Psoas muscle (tissue), 8 donors: ENCODE measurements at regions of chr19 and their contacts with region 1.

Region 1: DNA sequence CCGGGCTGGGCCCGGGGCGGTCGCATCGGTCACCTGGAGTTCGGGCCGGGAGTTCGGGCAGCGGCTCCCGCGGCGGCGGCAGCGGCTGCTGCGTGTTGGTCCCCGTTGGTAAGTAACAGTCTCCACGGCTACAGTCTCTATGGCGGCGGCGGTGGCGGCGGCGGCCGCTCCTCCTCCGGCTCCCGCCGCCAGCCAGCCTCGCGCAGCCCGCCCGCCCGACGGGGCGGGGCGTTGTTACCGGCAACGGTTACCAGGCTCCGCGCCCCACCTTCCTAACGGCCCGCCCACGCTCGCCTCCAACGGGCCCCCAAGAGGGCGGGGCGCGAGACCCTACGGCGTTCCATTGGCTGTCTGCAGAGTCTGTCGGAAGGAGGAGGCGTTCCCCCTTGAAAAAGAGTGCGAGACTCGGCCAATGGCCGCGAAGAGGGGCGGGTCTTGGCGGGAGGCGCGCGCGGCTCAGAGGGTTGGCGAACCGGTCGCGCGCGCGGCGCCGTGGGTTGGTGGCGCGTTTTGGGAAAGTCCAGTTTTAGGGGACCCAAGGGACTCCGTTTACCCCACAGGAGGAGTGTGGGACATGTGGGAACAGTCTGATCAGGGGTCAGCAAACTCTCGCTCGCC is at the start of gene RFX2:
- DNase-seq: peak; percentile 99
- ATAC-seq: peak; percentile 100
- H3K4me3 ChIP-seq: peak within 1 kb of the TSS; percentile 66
- H3K27ac ChIP-seq: no peak within 1 kb of the TSS
- H3K4me1 ChIP-seq: peaks cover 11% of the 10 kb centered on the region
- H3K27me3 ChIP-seq: peaks cover 0 to 32% (median 0%) of the 10 kb centered on the region in 3 donors
- CTCF ChIP-seq: no peak
- total RNA-seq, gene RFX2: 0.71 to 2.1 (median 1.3) TPM

Region 2: GRCh38 chr19:6056801-6057650 is 53.4 kb before region 1 on chr19:
- intact Hi-C with region 1: loop called (anchors 5 kb)
- DNase-seq: peak; percentile 82 to 87
- ATAC-seq: peak; percentile 92 to 96 (median 94)
- H3K4me3 ChIP-seq: peak overlapping the region; percentile 45
- H3K27ac ChIP-seq: peak overlapping the region; percentile 86
- H3K4me1 ChIP-seq: peaks cover 21% of the 10 kb centered on the region
- H3K27me3 ChIP-seq: no peaks in the 10 kb centered on the region
- CTCF ChIP-seq: no peak